Natural killer cell (primary cell): ENCODE measurements at regions of chr14 and their contacts with region 1.

Region 1: DNA sequence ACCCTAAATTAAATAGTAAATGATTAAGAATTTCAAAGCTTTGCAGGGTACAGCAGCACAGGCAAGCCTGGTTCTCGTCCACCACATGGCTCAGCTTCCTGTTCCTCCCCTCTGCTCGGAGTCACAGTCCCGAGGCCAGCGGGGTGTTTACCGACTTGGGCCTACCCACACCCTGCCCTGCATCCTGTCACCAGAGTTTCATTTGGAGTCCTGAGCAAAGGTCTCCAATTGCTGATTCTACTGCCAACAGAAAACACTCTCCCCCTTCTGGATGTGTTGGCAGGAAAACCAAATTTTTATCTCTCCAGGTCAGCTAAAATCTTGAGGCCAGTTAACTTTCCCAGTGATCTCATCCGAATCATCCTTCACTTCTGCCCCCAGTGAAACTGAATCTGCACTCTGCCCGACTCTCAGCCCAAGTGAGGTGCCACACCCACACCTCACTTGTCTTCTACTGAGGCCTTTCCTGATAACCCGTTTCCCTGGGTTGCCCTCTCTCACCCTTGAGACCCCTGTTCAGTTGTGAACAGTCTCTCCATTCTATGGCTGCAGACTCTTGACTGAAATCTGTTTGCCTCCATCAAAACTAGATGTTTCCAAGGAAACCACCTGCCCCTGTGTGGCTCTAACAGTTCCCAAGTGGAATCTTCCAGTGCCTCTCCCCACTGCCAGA is 71.2 kb downstream of the VCPKMT start:
- DNase-seq: peak; percentile 65 to 80
- ATAC-seq: peak; percentile 83 to 89 (median 88)
- H3K4me3 ChIP-seq: no peak overlapping the region
- H3K4me3 Mint-ChIP-seq: peak overlapping the region; percentile 63
- H3K27ac ChIP-seq: peak overlapping the region; percentile 89
- H3K27ac Mint-ChIP-seq: peak overlapping the region; percentile 96 to 99
- H3K4me1 ChIP-seq: peaks cover 75% of the 10 kb centered on the region
- H3K4me1 Mint-ChIP-seq: peaks cover 62 to 66% of the 10 kb centered on the region in 2 donors
- H3K27me3 ChIP-seq: no peaks in the 10 kb centered on the region
- H3K27me3 Mint-ChIP-seq: no peaks in the 10 kb centered on the region
- CTCF ChIP-seq: no peak

Region 2: DNA sequence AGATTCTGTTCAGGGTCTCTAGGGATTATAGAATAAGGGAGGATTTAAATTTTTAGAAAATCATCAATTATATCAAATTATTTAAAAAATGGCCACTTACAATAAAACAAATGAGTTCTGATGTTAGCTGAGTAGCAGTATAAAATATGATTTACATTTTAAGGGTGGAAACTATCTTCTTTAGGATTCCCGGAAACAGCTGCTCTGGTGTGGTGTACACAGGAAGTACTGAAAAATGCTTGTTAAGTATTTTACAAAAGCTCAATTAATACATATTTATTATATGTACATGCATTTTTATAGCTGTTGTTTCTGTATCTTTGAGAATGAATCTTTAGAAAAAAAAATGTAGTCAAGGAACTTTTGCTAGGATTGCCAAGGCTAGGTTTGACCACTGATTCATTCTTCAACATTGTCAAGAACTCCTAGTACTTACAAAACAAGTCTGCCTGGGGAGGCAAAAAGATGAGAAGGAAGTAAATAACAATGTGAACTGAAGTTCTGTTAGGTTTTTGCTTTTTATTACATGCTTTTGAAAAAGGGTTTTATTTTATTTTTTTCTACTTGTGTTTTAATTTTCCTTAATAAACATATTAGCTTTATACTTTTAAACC is 104.3 kb before region 1 on chr14:
- intact Hi-C with region 1: loop called (anchors 2 kb)
- DNase-seq: peak in 1 of 2 donors; percentile 55
- ATAC-seq: peak; percentile 64 to 77 (median 72)
- H3K4me3 ChIP-seq: no peak overlapping the region
- H3K4me3 Mint-ChIP-seq: peak overlapping the region; percentile 68
- H3K27ac ChIP-seq: peak overlapping the region; percentile 66
- H3K27ac Mint-ChIP-seq: peak overlapping the region; percentile 87 to 88
- H3K4me1 ChIP-seq: peaks cover 25% of the 10 kb centered on the region
- H3K4me1 Mint-ChIP-seq: peaks cover 55 to 56% of the 10 kb centered on the region in 2 donors
- H3K27me3 ChIP-seq: no peaks in the 10 kb centered on the region
- H3K27me3 Mint-ChIP-seq: no peaks in the 10 kb centered on the region
- CTCF ChIP-seq: no peak

Region 3: DNA sequence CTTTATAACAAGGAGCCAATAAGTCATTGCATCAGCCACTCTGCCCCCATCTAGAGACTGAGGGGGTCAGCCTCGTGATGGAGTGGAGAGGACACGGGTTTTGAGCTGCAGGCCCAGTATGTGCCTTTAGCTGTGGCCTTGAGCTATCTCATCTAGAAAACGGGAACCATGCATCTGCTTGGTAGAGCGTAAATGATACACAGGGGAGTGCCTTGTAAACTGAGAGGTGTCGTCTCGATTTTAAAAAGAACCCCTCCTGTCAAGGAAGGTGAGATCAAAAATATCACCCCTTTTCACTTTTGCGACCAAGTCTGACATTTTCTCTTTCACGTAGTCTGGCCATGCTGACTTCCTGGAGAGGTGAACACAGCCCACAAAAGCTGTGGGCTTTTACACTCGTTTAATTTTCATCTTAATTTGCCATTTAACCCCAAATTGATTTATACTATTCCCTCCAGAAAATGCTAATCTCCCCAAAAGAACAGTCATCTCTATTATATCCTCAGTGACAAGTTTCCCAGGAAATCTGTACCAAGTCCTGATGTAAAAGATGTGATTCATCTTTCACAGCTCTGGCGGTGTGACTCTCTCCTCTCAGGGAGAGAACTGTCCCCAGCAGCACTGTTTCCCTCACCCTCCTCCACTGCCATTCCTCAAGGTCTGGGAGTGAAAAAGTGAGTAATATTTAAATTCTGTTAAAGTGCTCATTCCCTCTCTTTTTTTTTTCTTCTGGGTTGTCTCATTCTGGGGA is 40.6 kb after region 1 on chr14:
- intact Hi-C with region 1: loop called (anchors 1 kb)
- DNase-seq: peak; percentile 36 to 70
- ATAC-seq: peak; percentile 53 to 66 (median 56)
- H3K4me3 ChIP-seq: no peak overlapping the region
- H3K4me3 Mint-ChIP-seq: peak overlapping the region; percentile 14
- H3K27ac ChIP-seq: peak overlapping the region; percentile 95
- H3K27ac Mint-ChIP-seq: peak overlapping the region; percentile 86 to 87
- H3K4me1 ChIP-seq: peaks cover 72% of the 10 kb centered on the region
- H3K4me1 Mint-ChIP-seq: peaks cover 62 to 66% of the 10 kb centered on the region in 2 donors
- H3K27me3 ChIP-seq: no peaks in the 10 kb centered on the region
- H3K27me3 Mint-ChIP-seq: no peaks in the 10 kb centered on the region
- CTCF ChIP-seq: no peak